ENCODE measurements at regions of chr18 and their contacts with region 1.

Region 1: DNA sequence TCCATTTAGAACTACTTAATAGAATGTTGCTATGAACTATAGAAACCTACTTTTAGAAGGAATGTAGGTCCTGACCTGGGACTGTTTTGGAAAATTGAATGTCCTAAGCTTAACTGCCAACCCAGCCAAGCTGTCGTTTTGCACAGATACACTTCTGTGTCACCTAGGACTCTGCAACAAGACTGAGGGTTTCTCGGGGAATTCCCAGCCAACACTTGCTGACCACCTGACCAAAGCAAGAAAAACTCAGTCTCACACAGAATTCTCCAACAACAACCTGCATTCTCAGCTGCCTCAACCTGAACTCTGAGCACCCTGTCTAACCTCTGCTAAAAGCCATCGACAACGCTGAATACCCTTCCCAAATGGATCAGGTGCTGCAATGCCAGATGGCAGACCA is 128.2 kb downstream of the SS18 start:
- DNase-seq: no peak
- H3K4me3 ChIP-seq: no peak overlapping the region
- H3K27ac ChIP-seq: no peak overlapping the region
- H3K4me1 ChIP-seq: no peaks in the 10 kb centered on the region
- H3K27me3 ChIP-seq: no peaks in the 10 kb centered on the region
- CTCF ChIP-seq: no peak
- EP300 ChIP-seq: no peak
- POLR2A ChIP-seq: no peak

Region 2: GRCh38 chr18:25737710-25738311 is 224.4 kb before region 1 on chr18:
- intact Hi-C with region 1: no loop called
- DNase-seq: no peak
- H3K4me3 ChIP-seq: no peak overlapping the region
- H3K27ac ChIP-seq: no peak overlapping the region
- H3K4me1 ChIP-seq: no peaks in the 10 kb centered on the region
- H3K27me3 ChIP-seq: no peaks in the 10 kb centered on the region
- CTCF ChIP-seq: no peak
- EP300 ChIP-seq: no peak
- POLR2A ChIP-seq: no peak

Region 3: DNA sequence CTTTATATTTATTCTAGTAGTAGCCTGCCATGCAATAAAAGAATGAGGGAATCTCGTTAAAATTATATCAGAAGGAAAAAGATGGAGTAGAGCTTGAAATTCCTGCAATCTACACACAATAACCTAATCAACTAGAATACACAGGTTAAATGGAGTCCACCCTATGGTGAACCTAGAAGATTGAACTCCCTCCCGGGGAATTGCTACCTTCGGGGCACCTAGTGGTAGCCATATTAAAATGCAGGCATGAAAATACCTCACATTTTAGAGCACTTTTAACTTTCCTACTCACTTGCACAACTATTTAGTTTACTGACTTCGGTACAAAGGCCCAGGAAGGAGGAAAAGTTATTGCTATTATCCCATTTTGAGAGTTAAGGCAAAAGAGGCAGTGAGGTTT is 46.3 kb before region 1 on chr18:
- intact Hi-C with region 1: loop called in 1 of 4 experiments (anchors 5 kb)
- DNase-seq: no peak
- H3K4me3 ChIP-seq: no peak overlapping the region
- H3K27ac ChIP-seq: no peak overlapping the region
- H3K4me1 ChIP-seq: peaks cover 2% of the 10 kb centered on the region
- H3K27me3 ChIP-seq: no peaks in the 10 kb centered on the region
- CTCF ChIP-seq: no peak
- EP300 ChIP-seq: no peak
- POLR2A ChIP-seq: no peak